Right cardiac atrium (tissue), 5 donors: ENCODE measurements at regions of chr5 and their contacts with region 1.

Region 1: GRCh38 chr5:134101686-134102439 is 12.6 kb upstream of the TCF7 start:
- DNase-seq: peak; percentile 55 to 86 (median 81)
- ATAC-seq: peak; percentile 56 to 74
- H3K4me3 ChIP-seq: no peak overlapping the region
- H3K27ac ChIP-seq: no peak overlapping the region
- H3K4me1 ChIP-seq: no peaks in the 10 kb centered on the region
- H3K27me3 ChIP-seq: no peaks in the 10 kb centered on the region

Region 2: DNA sequence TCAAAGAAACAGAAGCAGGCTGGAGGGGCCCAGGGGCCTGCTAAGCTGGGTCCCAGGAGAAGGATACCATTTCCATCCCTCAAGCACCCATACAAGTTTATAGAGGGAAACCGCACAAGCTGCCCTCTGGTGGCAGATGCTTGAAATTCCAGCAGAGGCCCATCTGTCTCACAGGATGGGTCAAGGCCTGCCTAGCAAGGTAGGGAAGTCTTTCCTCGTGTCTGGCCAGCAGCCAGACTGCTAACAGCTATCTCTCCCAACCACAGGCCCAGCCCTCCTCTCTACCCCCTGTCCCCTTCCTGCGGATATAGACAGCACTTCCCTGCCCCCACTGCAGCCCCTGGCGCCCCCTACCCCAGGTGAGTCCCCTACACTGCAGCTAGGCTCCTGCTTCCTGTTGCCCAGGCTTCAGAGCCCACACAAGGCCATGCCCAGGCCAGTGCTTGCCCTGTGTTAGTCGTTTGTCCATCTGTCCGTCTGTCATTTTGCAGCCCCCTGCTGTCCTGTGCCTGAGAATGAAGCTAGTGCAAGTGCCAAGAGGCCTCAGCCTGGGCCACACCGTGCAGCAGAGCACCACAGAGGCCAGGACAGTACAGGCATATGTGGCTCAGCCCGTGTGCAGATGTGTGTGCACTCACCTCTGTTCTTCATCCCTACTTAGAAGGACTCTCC is 38.8 kb after region 1 on chr5:
- intact Hi-C with region 1: loop called in 3 of 4 experiments (anchors 5 kb)
- DNase-seq: peak; percentile 57 to 83 (median 76)
- ATAC-seq: peak; percentile 55 to 66
- H3K4me3 ChIP-seq: no peak overlapping the region
- H3K27ac ChIP-seq: no peak overlapping the region
- H3K4me1 ChIP-seq: peaks cover 2% of the 10 kb centered on the region
- H3K27me3 ChIP-seq: no peaks in the 10 kb centered on the region

Region 3: GRCh38 chr5:134174841-134175839 is 73.3 kb after region 1 on chr5:
- intact Hi-C with region 1: no loop called
- DNase-seq: no peak
- ATAC-seq: no peak
- H3K4me3 ChIP-seq: peak overlapping the region; percentile 89
- H3K27ac ChIP-seq: no peak overlapping the region
- H3K4me1 ChIP-seq: no peaks in the 10 kb centered on the region
- H3K27me3 ChIP-seq: no peaks in the 10 kb centered on the region

Region 4: DNA sequence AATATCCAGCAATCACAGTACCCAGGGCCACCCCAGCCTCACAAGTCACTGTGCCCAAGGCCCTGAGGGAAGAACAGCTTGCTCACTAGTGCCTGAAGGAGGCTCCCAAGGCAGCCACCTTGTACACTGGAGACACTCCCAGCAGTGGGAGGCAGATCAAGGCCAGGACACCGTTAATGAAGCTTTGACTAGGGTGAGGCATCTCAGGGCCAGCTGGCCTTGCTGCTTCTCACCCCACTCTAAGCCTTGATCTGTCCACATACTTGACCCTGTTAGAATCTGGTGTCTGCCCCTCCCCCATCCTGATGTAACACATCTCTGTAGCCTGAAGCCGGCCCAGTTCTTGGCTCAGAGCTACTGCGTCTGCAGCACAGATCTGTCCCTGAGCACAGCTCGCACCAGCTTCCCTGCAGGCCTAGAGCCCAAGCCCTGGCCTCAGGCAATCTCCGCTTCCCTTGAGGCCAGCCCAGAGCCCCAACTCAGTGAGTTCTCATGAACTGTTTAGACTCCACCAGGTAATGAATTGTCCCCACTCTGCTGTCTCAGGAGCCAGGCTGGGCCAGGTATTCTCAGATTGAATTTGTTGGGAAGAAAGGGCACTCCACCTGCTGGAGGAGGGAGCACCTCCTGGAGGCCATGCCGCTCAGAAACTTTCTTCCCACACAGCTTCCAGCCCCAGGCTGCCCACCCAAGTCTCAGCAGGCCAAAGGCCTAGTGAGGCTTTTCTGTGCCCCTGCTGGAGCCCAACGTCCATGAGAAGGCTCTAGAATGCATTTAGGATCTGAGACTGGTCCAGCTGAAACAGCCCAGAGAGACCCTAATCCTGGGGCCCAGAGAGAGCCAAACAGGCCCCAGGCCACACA is 410.2 kb after region 1 on chr5:
- intact Hi-C with region 1: no loop called
- DNase-seq: peak; percentile 88 to 92 (median 90)
- ATAC-seq: peak; percentile 92
- H3K4me3 ChIP-seq: no peak overlapping the region
- H3K27ac ChIP-seq: peak overlapping the region; percentile 82
- H3K4me1 ChIP-seq: peaks cover 9% of the 10 kb centered on the region
- H3K27me3 ChIP-seq: no peaks in the 10 kb centered on the region